Sigmoid colon (tissue), 7 donors: ENCODE measurements at regions of chr12 and their contacts with region 1.

Region 1: DNA sequence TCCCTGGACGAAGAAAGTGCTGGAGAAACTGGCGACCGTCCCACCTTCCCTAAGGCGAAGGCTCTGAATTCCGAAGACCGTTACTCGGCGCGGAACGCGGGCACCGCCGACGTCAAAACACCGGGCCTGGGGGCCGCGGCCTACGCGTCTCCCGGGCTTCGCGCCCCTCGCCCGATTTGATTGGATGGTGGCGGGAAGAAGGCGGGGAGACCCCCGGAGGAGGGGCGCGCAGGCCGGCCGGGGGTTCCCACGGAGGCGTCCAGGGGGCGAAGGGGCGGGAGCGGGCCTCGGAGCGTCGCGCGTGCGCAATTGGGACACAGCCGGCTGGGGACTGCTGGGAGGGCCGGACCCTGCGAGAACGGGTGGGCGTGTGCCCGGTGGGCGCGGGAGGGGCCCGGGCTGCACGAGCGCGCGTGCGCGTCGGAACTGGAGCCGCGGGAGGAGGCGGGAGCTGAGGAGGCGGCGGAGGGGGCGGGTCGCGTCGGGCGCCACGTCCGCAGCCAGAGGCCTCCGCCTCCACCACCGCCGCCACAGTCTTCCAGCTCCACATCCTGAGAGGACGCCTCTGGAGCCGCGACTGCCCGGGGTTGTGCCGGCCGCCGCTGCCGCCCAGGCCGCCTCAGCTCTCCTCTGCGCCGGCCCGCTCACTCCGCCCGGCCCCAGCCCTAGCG is at the start of gene TMEM263:
- DNase-seq: peak; percentile 98
- H3K4me3 ChIP-seq: peak within 1 kb of the TSS; percentile 72 to 97 (median 95)
- H3K27ac ChIP-seq: peak within 1 kb of the TSS; percentile 99 to 100 (median 100)
- H3K4me1 ChIP-seq: peaks cover 0 to 45% (median 39%) of the 10 kb centered on the region in 4 donors
- H3K27me3 ChIP-seq: no peaks in the 10 kb centered on the region
- CTCF ChIP-seq: no peak
- EP300 ChIP-seq: no peak
- POLR2A ChIP-seq: peak in 1 of 2 donors; percentile 46
- total RNA-seq, gene TMEM263: 39.5 to 51.7 (median 46.4) TPM

Region 2: GRCh38 chr12:107027636-107028053 is 72.1 kb after region 1 on chr12:
- intact Hi-C with region 1: loop called (anchors 5 kb)
- DNase-seq: no peak
- H3K4me3 ChIP-seq: no peak overlapping the region
- H3K27ac ChIP-seq: peak overlapping the region; percentile 66 to 83 (median 82)
- H3K4me1 ChIP-seq: peaks cover 0 to 59% (median 37%) of the 10 kb centered on the region in 4 donors
- H3K27me3 ChIP-seq: no peaks in the 10 kb centered on the region
- CTCF ChIP-seq: no peak
- EP300 ChIP-seq: peak; percentile 33 to 92 (median 80)
- POLR2A ChIP-seq: no peak

Region 3: GRCh38 chr12:107560165-107560908 is 604.8 kb after region 1 on chr12:
- intact Hi-C with region 1: no loop called
- DNase-seq: no peak
- H3K4me3 ChIP-seq: no peak overlapping the region
- H3K27ac ChIP-seq: no peak overlapping the region
- H3K4me1 ChIP-seq: no peaks in the 10 kb centered on the region
- H3K27me3 ChIP-seq: no peaks in the 10 kb centered on the region
- CTCF ChIP-seq: no peak
- EP300 ChIP-seq: no peak
- POLR2A ChIP-seq: no peak